Dendritic cell treated with granulocyte-macrophage colony-stimulating factor and Interleukin-4, amounts not matched to agents 40 ng/mL and 50 ng/mL, for 4 days (primary cell): ENCODE measurements at regions of chr7 and their contacts with region 1.

Region 1: GRCh38 chr7:149147072-149147751 is at the start of gene ZNF398:
- H3K4me3 Mint-ChIP-seq: peak within 1 kb of the TSS; percentile 85
- H3K27ac Mint-ChIP-seq: peak within 1 kb of the TSS; percentile 90
- H3K4me1 Mint-ChIP-seq: peaks cover 30% of the 10 kb centered on the region
- H3K27me3 Mint-ChIP-seq: no peaks in the 10 kb centered on the region

Region 2: DNA sequence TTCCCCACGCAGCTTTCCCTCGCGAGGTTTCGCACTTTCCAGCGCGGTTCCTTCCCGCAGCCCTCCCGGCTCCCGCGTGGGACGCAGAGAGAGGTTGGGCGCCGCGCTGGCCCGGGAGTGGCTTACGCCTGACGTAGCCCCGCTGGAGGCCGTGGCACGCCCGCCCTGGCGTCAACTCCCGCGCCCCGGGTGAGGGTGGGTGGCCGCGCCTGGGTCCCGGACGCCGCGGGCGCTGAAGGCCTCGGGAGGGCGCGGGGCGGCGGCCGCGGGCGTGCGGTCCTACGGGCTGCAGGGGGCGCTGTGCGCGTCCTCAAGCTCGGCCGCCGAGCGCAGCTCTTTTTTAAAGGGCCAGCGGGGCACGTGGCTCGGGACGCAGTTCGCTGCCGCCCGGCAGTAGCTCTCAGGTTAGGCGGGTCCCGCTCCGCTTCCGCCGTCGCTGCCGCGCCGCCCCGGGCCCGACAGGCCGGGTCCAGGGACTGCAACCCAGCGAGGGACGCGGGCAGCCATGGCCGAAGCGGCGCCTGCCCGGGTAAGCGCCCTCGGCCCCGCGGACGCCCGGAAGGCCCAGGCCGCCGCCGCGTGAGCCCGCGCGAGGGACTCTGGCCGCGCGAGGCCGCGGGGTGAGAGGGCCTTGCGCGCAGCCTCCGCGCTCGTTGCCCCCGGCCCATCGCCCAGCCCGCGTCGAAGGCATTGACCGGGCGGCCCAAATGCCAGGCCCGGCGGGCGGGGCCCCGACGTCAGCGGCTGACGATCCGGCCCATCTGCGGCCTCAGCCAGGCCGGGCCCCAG is 114.8 kb after region 1 on chr7 and contains the start of gene ZNF783:
- intact Hi-C with region 1: loop called (anchors 5 kb)
- H3K4me3 Mint-ChIP-seq: peak within 1 kb of the TSS; percentile 90
- H3K27ac Mint-ChIP-seq: peak within 1 kb of the TSS; percentile 89
- H3K4me1 Mint-ChIP-seq: peaks cover 32% of the 10 kb centered on the region
- H3K27me3 Mint-ChIP-seq: no peaks in the 10 kb centered on the region